ENCODE measurements at regions of chr6 and their contacts with region 1.

Region 1: DNA sequence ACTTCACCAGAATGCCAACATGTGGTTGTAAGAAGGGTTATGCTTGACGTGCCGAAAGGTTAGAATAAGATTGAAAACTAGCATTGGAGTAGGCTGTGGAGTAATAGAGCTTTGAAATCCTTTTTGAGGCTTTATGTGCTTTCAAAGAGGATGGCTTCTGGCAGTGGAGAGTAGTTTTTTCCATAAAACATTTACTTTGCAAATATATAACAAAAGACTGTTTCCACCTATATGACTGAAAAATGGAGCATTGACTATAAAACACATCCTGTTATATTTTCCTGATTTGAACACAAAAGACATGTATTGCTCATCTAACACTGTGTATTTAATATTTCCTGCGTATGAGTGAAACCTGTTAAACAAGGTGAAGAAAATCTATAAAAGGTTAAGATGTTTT is 38.8 kb downstream of the ZFAND3 start:
- DNase-seq: no peak
- H3K4me3 ChIP-seq: no peak overlapping the region
- H3K4me3 Mint-ChIP-seq: no peak overlapping the region
- H3K27ac ChIP-seq: no peak overlapping the region
- H3K27ac Mint-ChIP-seq: peak overlapping the region in 3 of 7 donors; percentile 4 to 45 (median 8)
- H3K4me1 ChIP-seq: no peaks in the 10 kb centered on the region
- H3K4me1 Mint-ChIP-seq: peaks cover 18% of the 10 kb centered on the region
- H3K27me3 ChIP-seq: no peaks in the 10 kb centered on the region
- H3K27me3 Mint-ChIP-seq: no peaks in the 10 kb centered on the region
- CTCF ChIP-seq: no peak

Region 2: GRCh38 chr6:37653933-37654565 is 204.3 kb before region 1 on chr6:
- intact Hi-C with region 1: no loop called
- DNase-seq: peak; percentile 53 to 66 (median 63)
- H3K4me3 ChIP-seq: no peak overlapping the region
- H3K4me3 Mint-ChIP-seq: no peak overlapping the region
- H3K27ac ChIP-seq: no peak overlapping the region
- H3K27ac Mint-ChIP-seq: no peak overlapping the region
- H3K4me1 ChIP-seq: no peaks in the 10 kb centered on the region
- H3K4me1 Mint-ChIP-seq: peaks cover 7% of the 10 kb centered on the region
- H3K27me3 ChIP-seq: peaks cover 15 to 23% of the 10 kb centered on the region in 2 donors
- H3K27me3 Mint-ChIP-seq: peaks cover 15 to 45% (median 22%) of the 10 kb centered on the region in 3 donors
- CTCF ChIP-seq: peak; percentile 80

Region 3: DNA sequence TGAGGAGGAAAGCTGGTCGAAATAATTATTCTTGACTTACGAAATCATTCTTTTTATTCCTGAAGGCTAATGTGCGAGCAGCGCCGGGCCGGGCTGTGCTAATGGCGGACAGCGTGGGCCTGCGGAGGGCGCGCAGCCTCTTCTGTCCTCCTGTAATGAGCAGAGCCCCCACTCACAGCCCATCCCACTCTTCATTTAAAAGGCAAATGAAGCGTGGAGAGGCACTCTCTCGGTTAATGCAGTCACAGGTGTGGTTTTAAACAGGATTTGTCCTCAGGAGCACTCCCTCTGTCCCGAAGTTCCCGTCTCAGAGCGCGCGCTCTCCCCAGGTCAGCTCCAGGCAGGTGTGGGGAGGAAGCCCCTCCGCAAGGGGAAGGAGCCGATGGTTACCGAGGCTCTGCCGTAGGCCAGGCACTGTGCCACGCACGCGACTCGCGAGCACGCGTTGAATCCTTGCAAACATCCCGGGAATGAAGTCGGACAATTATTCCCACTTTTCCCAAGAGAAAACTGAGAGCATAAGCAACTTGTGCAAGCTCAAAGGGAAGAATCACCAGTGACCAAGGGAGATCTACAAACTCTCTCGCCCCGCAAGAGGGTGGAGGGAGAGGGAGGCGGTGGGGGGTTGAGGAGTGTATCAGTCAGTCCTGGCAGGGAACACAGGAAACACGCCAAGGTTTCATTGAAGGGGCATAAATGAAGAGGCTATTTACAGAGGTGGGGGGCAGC is 74.3 kb before region 1 on chr6:
- intact Hi-C with region 1: no loop called
- DNase-seq: peak in 1 of 3 donors; percentile 6
- H3K4me3 ChIP-seq: peak overlapping the region in 2 of 3 experiments; percentile 17 to 60
- H3K4me3 Mint-ChIP-seq: peak overlapping the region; percentile 64 to 87
- H3K27ac ChIP-seq: no peak overlapping the region
- H3K27ac Mint-ChIP-seq: peak overlapping the region in 1 of 7 donors; percentile 31
- H3K4me1 ChIP-seq: peaks cover 10 to 16% of the 10 kb centered on the region in 2 donors
- H3K4me1 Mint-ChIP-seq: peaks cover 17% of the 10 kb centered on the region
- H3K27me3 ChIP-seq: peaks cover 22 to 41% of the 10 kb centered on the region in 2 donors
- H3K27me3 Mint-ChIP-seq: peaks cover 45 to 59% (median 47%) of the 10 kb centered on the region in 3 donors
- CTCF ChIP-seq: no peak

Region 4: DNA sequence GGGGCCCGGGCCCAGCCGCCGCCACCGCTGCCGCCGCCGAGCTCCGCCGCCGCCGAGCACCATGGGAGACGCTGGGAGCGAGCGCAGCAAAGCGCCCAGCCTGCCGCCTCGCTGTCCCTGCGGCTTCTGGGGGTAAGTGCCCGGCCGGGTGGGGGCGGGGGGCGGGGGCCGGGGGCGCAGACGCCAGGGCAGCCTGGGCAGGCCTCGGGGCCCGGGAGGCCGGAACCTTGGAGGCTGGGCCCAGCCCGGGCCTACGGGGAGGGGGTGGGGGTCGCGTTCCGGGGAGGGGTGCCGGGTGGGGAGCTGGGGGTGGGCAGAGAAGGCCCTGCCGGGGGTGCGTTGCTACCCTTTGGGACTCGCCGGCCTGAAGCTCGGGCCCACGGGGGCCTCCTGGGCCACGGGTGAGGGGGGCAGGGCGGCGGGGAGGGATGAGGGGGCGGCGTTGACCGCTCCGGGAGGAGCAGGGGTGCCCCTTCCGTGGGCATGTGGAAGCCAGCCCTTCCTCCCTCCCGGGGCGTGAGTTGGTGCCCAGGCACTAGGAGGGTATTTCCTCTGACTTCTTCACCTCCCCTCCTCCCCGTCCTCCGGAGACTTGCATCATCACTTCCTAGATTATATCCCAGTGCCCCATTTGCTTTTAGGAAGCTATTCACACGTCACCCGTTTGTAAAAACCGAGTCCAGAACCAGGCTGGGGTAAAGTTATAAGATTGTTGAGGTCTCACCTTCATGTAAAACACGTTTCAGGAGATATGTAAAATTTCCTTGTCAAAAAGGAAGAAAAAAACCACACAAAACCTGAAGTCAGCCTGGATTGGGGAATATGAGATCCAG is 38.3 kb before region 1 on chr6:
- intact Hi-C with region 1: loop called in 1 of 2 experiments (anchors 5 kb)
- DNase-seq: peak; percentile 82 to 95 (median 85)
- H3K4me3 ChIP-seq: peak overlapping the region; percentile 55 to 90 (median 85)
- H3K4me3 Mint-ChIP-seq: peak overlapping the region; percentile 88 to 94
- H3K27ac ChIP-seq: peak overlapping the region; percentile 63 to 71
- H3K27ac Mint-ChIP-seq: peak overlapping the region; percentile 84 to 100 (median 92)
- H3K4me1 ChIP-seq: peaks cover 22 to 35% of the 10 kb centered on the region in 2 donors
- H3K4me1 Mint-ChIP-seq: peaks cover 45% of the 10 kb centered on the region
- H3K27me3 ChIP-seq: no peaks in the 10 kb centered on the region
- H3K27me3 Mint-ChIP-seq: peaks cover 0 to 2% (median 0%) of the 10 kb centered on the region in 3 donors
- CTCF ChIP-seq: no peak

Region 5: DNA sequence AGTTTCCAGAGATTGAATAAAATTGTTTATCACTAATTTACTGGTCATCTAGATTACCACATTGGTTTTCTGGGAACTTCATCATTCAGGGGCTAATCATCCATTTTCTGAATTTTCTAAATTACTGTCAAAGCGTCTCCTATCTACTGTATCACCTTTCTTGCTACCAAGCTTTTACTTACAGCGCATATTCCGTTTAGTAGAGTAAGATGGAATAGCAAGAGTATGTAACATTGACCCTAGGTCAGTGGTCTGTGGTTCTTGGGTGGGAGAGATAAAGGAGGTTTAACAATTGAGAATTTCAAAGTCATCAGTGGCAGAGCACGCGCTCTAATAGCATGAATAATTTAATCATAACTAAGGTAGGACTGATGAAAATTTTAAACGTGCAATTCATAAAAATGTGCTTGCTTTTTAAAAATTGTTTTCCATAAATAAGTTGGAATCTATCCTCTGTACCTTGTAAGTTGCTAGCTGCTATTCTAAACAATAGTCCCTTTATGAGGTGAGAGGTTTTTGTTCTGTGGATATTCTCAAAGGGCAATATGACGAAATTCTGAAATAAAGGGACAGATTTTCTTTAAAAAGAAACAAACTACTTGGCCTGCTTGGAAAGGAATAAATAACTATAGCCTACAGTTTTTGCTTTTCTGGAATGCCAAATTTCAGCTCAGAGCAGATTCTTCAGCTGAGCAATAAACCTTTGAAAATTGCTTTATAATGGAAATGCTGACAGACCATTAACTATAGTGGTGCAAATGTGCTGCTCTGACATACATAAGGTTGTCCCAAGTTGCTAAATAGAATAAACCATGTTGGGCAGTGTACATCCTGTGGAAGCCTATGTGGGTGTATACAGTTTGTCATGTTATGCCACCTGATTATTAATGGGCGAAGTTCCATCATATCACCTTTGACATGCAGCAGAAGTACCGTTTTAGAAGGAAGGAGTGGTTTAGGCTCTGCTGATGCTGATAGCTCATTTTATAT is 45.3 kb after region 1 on chr6:
- intact Hi-C with region 1: no loop called
- DNase-seq: no peak
- H3K4me3 ChIP-seq: no peak overlapping the region
- H3K4me3 Mint-ChIP-seq: no peak overlapping the region
- H3K27ac ChIP-seq: no peak overlapping the region
- H3K27ac Mint-ChIP-seq: no peak overlapping the region
- H3K4me1 ChIP-seq: no peaks in the 10 kb centered on the region
- H3K4me1 Mint-ChIP-seq: peaks cover 5% of the 10 kb centered on the region
- H3K27me3 ChIP-seq: no peaks in the 10 kb centered on the region
- H3K27me3 Mint-ChIP-seq: no peaks in the 10 kb centered on the region
- CTCF ChIP-seq: no peak

Region 6: DNA sequence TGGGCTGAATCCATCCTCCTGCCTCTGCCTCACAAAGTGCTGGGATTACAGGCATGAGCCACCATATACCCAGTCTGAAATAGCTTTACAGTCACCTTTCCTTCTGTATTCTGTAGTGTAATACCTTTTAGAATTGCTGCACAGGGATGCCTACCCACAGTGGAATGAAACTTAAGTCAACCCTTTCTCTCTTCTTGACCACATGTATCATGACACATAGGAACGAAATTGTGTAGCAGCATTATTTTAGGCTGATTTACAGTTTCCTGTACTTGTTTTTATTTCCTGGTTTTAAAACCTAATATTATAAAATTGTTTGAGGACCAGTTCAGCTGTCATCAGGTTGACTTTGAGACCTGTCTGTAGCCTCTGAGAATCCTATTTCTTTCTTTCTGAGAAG is 258.9 kb after region 1 on chr6:
- intact Hi-C with region 1: no loop called
- DNase-seq: no peak
- H3K4me3 ChIP-seq: no peak overlapping the region
- H3K4me3 Mint-ChIP-seq: no peak overlapping the region
- H3K27ac ChIP-seq: no peak overlapping the region
- H3K27ac Mint-ChIP-seq: no peak overlapping the region
- H3K4me1 ChIP-seq: no peaks in the 10 kb centered on the region
- H3K4me1 Mint-ChIP-seq: no peaks in the 10 kb centered on the region
- H3K27me3 ChIP-seq: no peaks in the 10 kb centered on the region
- H3K27me3 Mint-ChIP-seq: no peaks in the 10 kb centered on the region
- CTCF ChIP-seq: no peak

Measured in CD14-positive monocyte (primary cell).